B cell (primary cell): ENCODE measurements at regions of chr1 and their contacts with region 1.

Region 1: GRCh38 chr1:8423650-8424538 is 106.0 kb downstream of the SLC45A1 start:
- DNase-seq: peak; percentile 75
- ATAC-seq: peak; percentile 28
- H3K4me3 ChIP-seq: peak overlapping the region; percentile 69 to 93 (median 84)
- H3K4me3 Mint-ChIP-seq: peak overlapping the region; percentile 90
- H3K27ac ChIP-seq: peak overlapping the region; percentile 77 to 88
- H3K27ac Mint-ChIP-seq: peak overlapping the region; percentile 91
- H3K4me1 ChIP-seq: peaks cover 79 to 80% of the 10 kb centered on the region in 2 donors
- H3K4me1 Mint-ChIP-seq: peaks cover 42% of the 10 kb centered on the region
- H3K27me3 ChIP-seq: no peaks in the 10 kb centered on the region
- H3K27me3 Mint-ChIP-seq: no peaks in the 10 kb centered on the region
- CTCF ChIP-seq: no peak

Region 2: GRCh38 chr1:8396786-8397406 is 27.0 kb before region 1 on chr1:
- CTCF ChIA-PET with region 1: interaction called, 4 read pairs
- POLR2A ChIA-PET with region 1: interaction called, 6 read pairs
- intact Hi-C with region 1: loop called (anchors 1 kb)
- DNase-seq: no peak
- ATAC-seq: no peak
- H3K4me3 ChIP-seq: no peak overlapping the region
- H3K4me3 Mint-ChIP-seq: peak overlapping the region; percentile 14
- H3K27ac ChIP-seq: peak overlapping the region; percentile 56 to 79
- H3K27ac Mint-ChIP-seq: peak overlapping the region; percentile 66
- H3K4me1 ChIP-seq: peaks cover 47 to 52% of the 10 kb centered on the region in 2 donors
- H3K4me1 Mint-ChIP-seq: peaks cover 67% of the 10 kb centered on the region
- H3K27me3 ChIP-seq: no peaks in the 10 kb centered on the region
- H3K27me3 Mint-ChIP-seq: no peaks in the 10 kb centered on the region
- CTCF ChIP-seq: no peak

Region 3: GRCh38 chr1:8439015-8439702 is 15.3 kb after region 1 on chr1:
- CTCF ChIA-PET with region 1: interaction called, 10 read pairs
- POLR2A ChIA-PET with region 1: interaction called, 11 read pairs
- intact Hi-C with region 1: loop called (anchors 1 kb)
- DNase-seq: peak; percentile 77
- ATAC-seq: peak; percentile 95
- H3K4me3 ChIP-seq: no peak overlapping the region
- H3K4me3 Mint-ChIP-seq: peak overlapping the region; percentile 54
- H3K27ac ChIP-seq: peak overlapping the region; percentile 8 to 81
- H3K27ac Mint-ChIP-seq: peak overlapping the region; percentile 91
- H3K4me1 ChIP-seq: peaks cover 27 to 33% of the 10 kb centered on the region in 2 donors
- H3K4me1 Mint-ChIP-seq: peaks cover 50% of the 10 kb centered on the region
- H3K27me3 ChIP-seq: no peaks in the 10 kb centered on the region
- H3K27me3 Mint-ChIP-seq: no peaks in the 10 kb centered on the region
- CTCF ChIP-seq: no peak

Region 4: GRCh38 chr1:8497210-8497801 is 73.4 kb after region 1 on chr1:
- CTCF ChIA-PET with region 1: interaction called, 5 read pairs
- POLR2A ChIA-PET with region 1: no interaction called
- intact Hi-C with region 1: loop called (anchors 2 kb)
- DNase-seq: peak; percentile 52
- ATAC-seq: peak; percentile 46
- H3K4me3 ChIP-seq: peak overlapping the region in 3 of 5 experiments; percentile 7 to 39 (median 8)
- H3K4me3 Mint-ChIP-seq: peak overlapping the region; percentile 78
- H3K27ac ChIP-seq: peak overlapping the region; percentile 88 to 93
- H3K27ac Mint-ChIP-seq: peak overlapping the region; percentile 91
- H3K4me1 ChIP-seq: peaks cover 50 to 60% of the 10 kb centered on the region in 2 donors
- H3K4me1 Mint-ChIP-seq: peaks cover 61% of the 10 kb centered on the region
- H3K27me3 ChIP-seq: no peaks in the 10 kb centered on the region
- H3K27me3 Mint-ChIP-seq: no peaks in the 10 kb centered on the region
- CTCF ChIP-seq: no peak

Region 5: DNA sequence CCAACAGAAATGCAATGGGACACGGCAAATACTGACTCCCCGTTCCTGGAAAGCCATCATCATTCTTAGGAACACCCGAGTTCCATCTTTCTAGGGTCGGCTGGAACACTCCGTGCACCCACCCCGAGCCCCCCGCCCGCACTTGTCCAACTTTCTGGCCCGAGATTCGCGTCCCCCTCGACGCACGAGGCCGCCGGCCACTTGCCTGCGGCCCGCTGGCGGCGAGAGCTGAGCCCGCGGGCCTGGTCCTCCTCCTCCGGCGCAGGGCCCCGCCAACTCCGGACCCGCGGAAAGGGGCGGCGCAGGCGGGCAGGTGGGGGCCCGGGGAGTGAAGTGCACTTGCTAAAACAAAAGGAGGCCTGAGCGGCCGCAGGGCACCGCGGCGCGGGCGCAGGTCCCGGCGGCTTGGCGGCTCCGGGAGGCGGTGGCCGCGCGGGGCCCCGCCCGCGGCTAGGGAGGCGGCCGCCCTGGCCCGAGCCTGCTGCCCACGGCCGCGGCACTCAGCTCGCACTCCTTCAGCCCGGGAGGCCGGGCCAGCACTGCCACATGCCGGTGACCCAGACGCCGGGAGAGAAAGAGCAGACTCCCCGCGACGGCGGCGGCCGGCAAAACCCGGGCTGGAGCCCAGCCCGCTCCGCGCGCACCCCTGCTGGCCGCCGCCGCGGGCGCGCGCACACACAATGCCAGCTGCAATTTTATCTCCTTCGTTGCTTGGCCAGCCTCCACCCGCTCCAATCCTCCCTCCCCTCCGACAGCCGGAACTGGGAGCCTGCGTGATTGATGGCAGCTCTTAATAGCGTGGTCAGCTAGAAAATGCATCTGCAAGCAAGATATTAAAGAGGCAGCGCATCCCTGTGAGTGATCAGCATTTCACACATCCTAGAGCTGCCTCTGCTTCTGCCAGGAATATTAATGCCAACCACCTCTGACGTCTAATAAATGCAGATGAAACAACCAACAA is 279.2 kb after region 1 on chr1:
- CTCF ChIA-PET with region 1: interaction called, 4 read pairs
- POLR2A ChIA-PET with region 1: no interaction called
- intact Hi-C with region 1: loop called (anchors 1 kb)
- DNase-seq: peak; percentile 88
- ATAC-seq: peak; percentile 72
- H3K4me3 ChIP-seq: peak overlapping the region; percentile 60 to 81 (median 63)
- H3K4me3 Mint-ChIP-seq: peak overlapping the region; percentile 93
- H3K27ac ChIP-seq: peak overlapping the region; percentile 54 to 77
- H3K27ac Mint-ChIP-seq: peak overlapping the region; percentile 93
- H3K4me1 ChIP-seq: peaks cover 32 to 39% of the 10 kb centered on the region in 2 donors
- H3K4me1 Mint-ChIP-seq: peaks cover 61% of the 10 kb centered on the region
- H3K27me3 ChIP-seq: no peaks in the 10 kb centered on the region
- H3K27me3 Mint-ChIP-seq: no peaks in the 10 kb centered on the region
- CTCF ChIP-seq: no peak

Region 6: DNA sequence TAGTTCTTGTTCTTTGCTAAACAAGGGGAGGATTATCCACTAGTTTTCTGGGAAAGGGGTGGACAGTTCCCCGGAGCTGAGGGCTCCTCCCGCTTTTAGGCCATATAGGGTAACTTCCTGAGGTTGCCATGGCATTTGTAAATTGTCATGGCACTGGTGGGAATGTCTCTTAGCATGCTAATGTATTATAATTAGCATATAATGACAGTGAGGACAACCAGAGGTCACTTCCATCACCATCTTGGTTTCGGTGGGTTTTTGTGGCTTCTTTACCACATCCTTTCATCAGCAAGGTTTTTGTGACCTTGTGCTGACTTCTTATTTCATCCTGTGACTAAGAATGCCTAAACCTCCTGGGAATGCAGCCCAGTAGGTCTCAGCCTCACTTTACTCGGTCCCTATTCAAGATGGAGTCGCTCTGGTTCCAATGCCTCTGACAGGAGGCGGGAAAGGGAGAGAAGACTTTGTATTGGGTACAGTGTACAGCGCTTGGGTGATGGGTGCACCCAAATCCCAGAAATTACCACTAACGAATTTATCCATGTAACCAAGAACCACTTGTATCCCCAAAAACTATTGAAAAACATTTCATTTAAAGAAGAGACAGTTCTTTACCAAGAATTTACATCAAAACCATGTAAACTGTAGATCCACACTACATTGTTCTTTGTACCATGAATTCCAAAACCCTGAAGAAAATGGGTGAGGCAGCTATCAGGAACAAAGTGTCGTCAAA is 654.3 kb after region 1 on chr1:
- CTCF ChIA-PET with region 1: no interaction called
- POLR2A ChIA-PET with region 1: no interaction called
- intact Hi-C with region 1: loop called (anchors 5 kb)
- DNase-seq: no peak
- ATAC-seq: peak; percentile 4
- H3K4me3 ChIP-seq: peak overlapping the region in 1 of 5 experiments; percentile 8
- H3K4me3 Mint-ChIP-seq: peak overlapping the region; percentile 70
- H3K27ac ChIP-seq: no peak overlapping the region
- H3K27ac Mint-ChIP-seq: peak overlapping the region; percentile 26
- H3K4me1 ChIP-seq: peaks cover 85 to 94% of the 10 kb centered on the region in 2 donors
- H3K4me1 Mint-ChIP-seq: peaks cover 80% of the 10 kb centered on the region
- H3K27me3 ChIP-seq: peaks cover 0 to 6% (median 3%) of the 10 kb centered on the region in 4 experiments
- H3K27me3 Mint-ChIP-seq: peaks cover 14% of the 10 kb centered on the region
- CTCF ChIP-seq: no peak